ENCODE measurements at regions of chr7 and their contacts with region 1.

Region 1: GRCh38 chr7:79282063-79282694 is 171.3 kb downstream of the MAGI2 start:
- DNase-seq: no peak
- ATAC-seq: peak; percentile 73

Region 2: GRCh38 chr7:78879206-78879605 is 403.0 kb before region 1 on chr7:
- intact Hi-C with region 1: loop called (anchors 10 kb)
- DNase-seq: no peak
- ATAC-seq: no peak

Region 3: GRCh38 chr7:79504712-79505389 is 222.7 kb after region 1 on chr7:
- intact Hi-C with region 1: no loop called
- DNase-seq: peak; percentile 50
- ATAC-seq: peak; percentile 56

Measured in sciatic nerve (tissue), 2 donors.